WTC11 (cell line): ENCODE measurements at regions of chr2 and their contacts with region 1.

Region 1: GRCh38 chr2:65064728-65065552 is 8.7 kb downstream of the CEP68 start:
- DNase-seq: no peak
- ATAC-seq: peak; percentile 76
- H3K4me3 Mint-ChIP-seq: no peak overlapping the region
- H3K27ac Mint-ChIP-seq: peak overlapping the region; percentile 59
- H3K4me1 Mint-ChIP-seq: peaks cover 12% of the 10 kb centered on the region; the same call in 1 of the 2 replicates
- H3K27me3 Mint-ChIP-seq: no peaks in the 10 kb centered on the region
- CTCF ChIP-seq: peak; percentile 35; the same call in 1 of the 2 replicates

Region 2: GRCh38 chr2:64685438-64685837 is 379.5 kb before region 1 on chr2:
- CTCF ChIA-PET with region 1: no interaction called
- POLR2A ChIA-PET with region 1: interaction called, 13 read pairs
- DNase-seq: no peak
- ATAC-seq: no peak
- H3K4me3 Mint-ChIP-seq: no peak overlapping the region
- H3K27ac Mint-ChIP-seq: no peak overlapping the region
- H3K4me1 Mint-ChIP-seq: peaks cover 5% of the 10 kb centered on the region
- H3K27me3 Mint-ChIP-seq: no peaks in the 10 kb centered on the region
- CTCF ChIP-seq: no peak